ENCODE measurements at regions of chr12 and their contacts with region 1.

Region 1: DNA sequence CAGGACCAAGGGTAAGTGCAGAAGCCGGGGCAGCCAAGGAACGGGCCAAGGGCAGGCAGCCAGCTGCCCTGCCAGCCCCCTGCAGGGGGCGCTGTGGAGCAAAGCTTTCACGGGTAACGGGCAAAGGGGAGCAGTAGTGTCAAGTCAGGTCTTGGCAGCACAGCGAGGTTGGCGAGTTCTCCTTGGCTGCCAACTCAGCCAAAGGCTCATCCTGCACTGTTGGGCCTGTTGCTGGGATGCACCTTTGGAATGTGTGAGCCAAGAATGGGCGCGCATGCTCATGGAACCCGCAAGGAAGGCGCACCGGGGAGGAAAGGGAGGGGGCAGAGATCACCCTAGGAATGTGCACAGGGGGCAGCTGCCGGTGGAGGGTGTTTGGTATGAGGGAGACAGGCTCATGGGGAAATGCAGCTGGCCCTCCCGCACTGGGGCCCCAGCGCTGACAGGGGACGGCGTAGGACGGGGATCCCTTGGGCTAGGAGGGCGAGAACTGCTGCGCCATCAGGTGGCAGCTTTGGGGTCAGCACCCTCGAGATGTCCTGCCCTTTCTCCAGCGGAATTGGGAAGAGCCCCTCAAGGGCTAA is 138.0 kb downstream of the ASCL4 start:
- DNase-seq: peak; percentile 6 to 78 (median 49)

Region 2: GRCh38 chr12:107593713-107594381 is 318.7 kb before region 1 on chr12:
- intact Hi-C with region 1: no loop called
- DNase-seq: no peak

Region 3: GRCh38 chr12:108514973-108515814 is 602.7 kb after region 1 on chr12 and contains the start of gene FICD:
- intact Hi-C with region 1: loop called (anchors 10 kb)
- DNase-seq: peak; percentile 100

Region 4: DNA sequence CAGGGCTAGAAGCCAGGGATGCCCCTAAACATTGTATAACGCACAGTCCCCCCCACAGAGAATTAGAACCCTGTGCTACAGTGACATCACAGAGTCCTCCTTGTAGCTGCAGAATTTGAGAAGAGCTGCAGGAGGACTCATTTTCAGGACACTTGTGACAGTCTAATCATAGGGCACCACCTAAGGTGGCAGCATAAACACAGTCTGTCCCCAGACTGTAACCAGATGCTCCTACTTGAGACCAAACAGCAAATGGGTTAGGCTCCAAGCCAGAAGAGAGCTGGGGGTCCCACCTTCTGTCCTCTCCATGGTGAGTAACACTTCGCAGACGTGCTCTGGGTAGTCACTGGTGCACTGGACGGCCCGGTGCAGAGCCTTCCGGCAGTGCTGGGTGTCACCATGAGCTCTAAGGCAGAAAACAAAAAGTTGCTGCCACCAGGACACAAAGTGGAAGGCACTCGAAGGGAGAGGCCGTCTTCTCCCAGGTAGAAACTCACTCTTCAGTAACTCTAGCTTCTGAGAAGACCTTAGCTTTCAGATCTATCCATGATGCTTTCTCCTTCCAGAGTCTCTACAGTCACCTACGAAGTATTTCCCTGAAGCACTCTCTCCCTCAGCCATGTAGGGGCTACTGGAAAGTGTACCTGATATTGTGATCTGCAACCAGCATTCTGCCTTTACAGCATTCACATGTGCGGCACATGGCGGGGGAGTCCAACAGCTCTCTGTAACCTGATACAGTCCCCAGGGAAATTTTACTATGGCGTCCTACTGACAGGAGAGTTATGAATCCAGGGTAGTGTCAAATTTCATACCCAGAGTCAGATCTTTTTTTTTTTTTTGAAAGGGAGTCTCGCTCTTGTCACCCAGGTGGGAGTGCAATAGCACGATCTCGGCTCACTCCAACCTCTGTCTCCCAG is 619.7 kb after region 1 on chr12:
- intact Hi-C with region 1: no loop called
- DNase-seq: no peak